H1 (cell line): ENCODE measurements at regions of chr5 and their contacts with region 1.

Region 1: DNA sequence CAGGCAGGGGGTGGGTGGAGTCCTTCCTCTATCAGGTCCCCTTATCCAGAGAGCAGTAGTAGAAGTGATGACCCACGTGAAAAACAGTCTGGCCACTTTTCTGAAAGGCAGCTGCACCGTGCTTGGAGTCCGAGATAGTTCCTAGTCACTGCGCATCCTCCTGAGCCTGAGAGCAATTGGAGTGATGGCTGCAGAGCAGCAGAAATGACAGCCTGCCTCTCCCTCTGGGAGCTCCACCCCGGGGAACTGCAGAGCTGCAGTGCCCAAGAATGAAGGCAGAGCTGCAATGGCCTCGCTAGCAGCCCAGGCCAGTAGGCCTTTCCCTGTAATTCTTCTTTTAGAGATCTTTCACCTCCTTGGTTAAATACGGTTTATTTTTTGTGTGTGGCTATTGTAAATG is 82.6 kb downstream of the CETN3 start:
- DNase-seq: no peak
- H3K4me3 ChIP-seq: no peak overlapping the region
- H3K27ac ChIP-seq: no peak overlapping the region
- H3K4me1 ChIP-seq: no peaks in the 10 kb centered on the region
- H3K27me3 ChIP-seq: no peaks in the 10 kb centered on the region
- CTCF ChIP-seq: no peak
- EP300 ChIP-seq: no peak
- POLR2A ChIP-seq: no peak
- RAD21 ChIP-seq: no peak

Region 2: GRCh38 chr5:90289837-90290236 is 37.2 kb before region 1 on chr5:
- CTCF ChIA-PET with region 1: no interaction called
- POLR2A ChIA-PET with region 1: no interaction called
- DNase-seq: no peak
- H3K4me3 ChIP-seq: no peak overlapping the region
- H3K27ac ChIP-seq: no peak overlapping the region
- H3K4me1 ChIP-seq: no peaks in the 10 kb centered on the region
- H3K27me3 ChIP-seq: no peaks in the 10 kb centered on the region
- CTCF ChIP-seq: no peak
- EP300 ChIP-seq: no peak
- POLR2A ChIP-seq: no peak
- RAD21 ChIP-seq: no peak

Region 3: GRCh38 chr5:90386099-90386710 is 59.2 kb after region 1 on chr5:
- CTCF ChIA-PET with region 1: interaction called, 13 read pairs
- POLR2A ChIA-PET with region 1: no interaction called
- DNase-seq: no peak
- H3K4me3 ChIP-seq: no peak overlapping the region
- H3K27ac ChIP-seq: no peak overlapping the region
- H3K4me1 ChIP-seq: no peaks in the 10 kb centered on the region
- H3K27me3 ChIP-seq: no peaks in the 10 kb centered on the region
- CTCF ChIP-seq: peak in 2 of 3 experiments; percentile 19 to 25; a peak in 2 of 4 replicates
- EP300 ChIP-seq: no peak
- POLR2A ChIP-seq: no peak
- RAD21 ChIP-seq: peak in 1 of 2 experiments; percentile 65